Gastrocnemius medialis (tissue), 4 donors: ENCODE measurements at regions of chr14 and their contacts with region 1.

Region 1: DNA sequence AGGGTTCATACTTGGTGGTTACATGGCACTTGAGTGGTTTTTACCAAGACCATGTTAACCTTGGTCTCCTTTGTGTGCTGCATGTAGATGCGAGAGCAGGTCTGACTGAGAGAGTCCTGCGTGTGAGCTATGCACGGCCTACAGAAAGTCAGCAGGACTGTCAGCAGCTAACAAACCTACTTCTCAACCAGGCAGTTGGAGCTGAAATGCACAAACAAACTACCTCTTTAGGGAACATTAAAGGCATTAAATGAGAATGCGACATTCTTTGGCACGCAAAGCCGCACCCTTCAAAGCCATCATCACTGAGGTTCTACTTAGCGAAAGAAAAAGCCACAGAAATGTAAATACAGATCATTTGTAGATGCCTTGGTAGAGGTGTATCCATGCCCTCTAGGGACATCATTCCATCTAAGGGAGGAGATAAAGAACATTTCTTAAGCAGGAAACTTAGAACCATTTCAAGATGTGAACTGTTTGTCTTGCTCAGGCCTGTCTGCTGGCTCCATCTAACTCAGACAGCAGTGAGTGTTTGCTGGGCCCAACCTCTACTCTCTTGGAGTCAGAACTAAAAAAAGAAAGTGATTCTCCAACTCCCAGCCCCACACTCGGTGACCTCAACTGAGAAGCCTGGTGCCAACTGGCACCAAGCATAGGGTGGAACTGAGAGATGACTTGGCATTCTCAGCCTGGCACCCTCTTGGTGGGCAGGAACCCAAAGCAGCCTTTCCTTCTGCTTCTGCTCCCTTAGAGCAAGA is 63.4 kb upstream of the MBIP start:
- DNase-seq: peak; percentile 45 to 82
- ATAC-seq: peak; percentile 97 to 99
- H3K4me3 ChIP-seq: no peak overlapping the region
- H3K27ac ChIP-seq: peak overlapping the region; percentile 60 to 74 (median 66)
- H3K4me1 ChIP-seq: peaks cover 13 to 23% of the 10 kb centered on the region in 2 donors
- H3K27me3 ChIP-seq: no peaks in the 10 kb centered on the region
- CTCF ChIP-seq: no peak
- POLR2A ChIP-seq: no peak

Region 2: GRCh38 chr14:36424478-36425102 is 40.7 kb after region 1 on chr14:
- in situ Hi-C with region 1: loop called in 1 of 4 experiments (anchors 5 kb)
- intact Hi-C with region 1: loop called (anchors 5 kb)
- DNase-seq: peak in 1 of 2 donors; percentile 19
- ATAC-seq: peak in 1 of 2 donors; percentile 32
- H3K4me3 ChIP-seq: no peak overlapping the region
- H3K27ac ChIP-seq: peak overlapping the region in 3 of 4 donors; percentile 24 to 73 (median 28)
- H3K4me1 ChIP-seq: peaks cover 35 to 38% of the 10 kb centered on the region in 2 donors
- H3K27me3 ChIP-seq: no peaks in the 10 kb centered on the region
- CTCF ChIP-seq: no peak
- POLR2A ChIP-seq: no peak